Activated naive CD4-positive, alpha-beta T cell treated with anti-CD3 and anti-CD28 coated beads, Interleukin-2, amount 10 ng/mL, durations not matched to agents 7 days and 5 days (primary cell): ENCODE measurements at regions of chr6 and their contacts with region 1.

Region 1: DNA sequence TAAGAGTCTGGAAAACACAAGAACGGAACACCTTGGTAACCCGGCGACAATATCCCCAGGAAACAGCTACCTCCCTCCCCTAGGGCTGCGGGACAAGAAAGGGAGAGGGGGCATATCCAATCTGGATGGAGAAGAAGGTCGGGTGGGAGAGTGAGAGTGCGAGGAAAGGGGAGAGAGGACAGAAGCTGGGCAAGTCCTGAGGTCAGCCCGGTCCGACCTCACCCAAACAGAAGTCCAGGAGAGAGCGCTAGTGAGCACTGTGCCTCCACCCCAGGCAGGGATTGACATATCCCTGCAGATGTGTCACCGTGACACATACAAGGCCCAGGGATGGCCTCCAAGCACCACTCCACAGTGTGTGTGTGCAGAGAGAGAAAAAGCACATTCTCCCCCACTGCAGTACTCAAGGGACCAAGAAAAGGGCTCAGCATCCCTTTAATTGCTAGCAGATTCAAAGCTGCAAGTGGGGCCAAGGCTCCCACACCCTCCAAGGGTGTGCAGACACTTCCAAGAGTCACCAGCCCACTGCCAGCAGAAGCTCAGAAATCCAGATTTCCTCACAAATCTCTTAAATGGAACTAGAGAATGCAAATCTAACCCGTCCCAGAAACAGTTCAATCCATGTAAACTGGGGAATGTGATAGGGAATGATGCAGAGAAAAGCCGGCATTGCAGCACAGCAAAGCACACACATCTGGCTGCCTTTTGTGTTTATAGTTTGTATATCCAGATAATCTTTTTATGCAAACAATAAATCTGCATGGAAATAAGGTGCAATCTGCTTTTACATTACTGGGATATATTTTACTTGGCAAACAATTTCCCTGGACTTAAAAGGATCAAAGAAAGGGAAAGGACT is 3.1 kb downstream of the PXDC1 start:
- DNase-seq: peak; percentile 61
- H3K4me3 Mint-ChIP-seq: no peak overlapping the region
- H3K27ac Mint-ChIP-seq: no peak overlapping the region
- H3K4me1 Mint-ChIP-seq: peaks cover 6% of the 10 kb centered on the region
- H3K27me3 Mint-ChIP-seq: peaks cover 82% of the 10 kb centered on the region

Region 2: DNA sequence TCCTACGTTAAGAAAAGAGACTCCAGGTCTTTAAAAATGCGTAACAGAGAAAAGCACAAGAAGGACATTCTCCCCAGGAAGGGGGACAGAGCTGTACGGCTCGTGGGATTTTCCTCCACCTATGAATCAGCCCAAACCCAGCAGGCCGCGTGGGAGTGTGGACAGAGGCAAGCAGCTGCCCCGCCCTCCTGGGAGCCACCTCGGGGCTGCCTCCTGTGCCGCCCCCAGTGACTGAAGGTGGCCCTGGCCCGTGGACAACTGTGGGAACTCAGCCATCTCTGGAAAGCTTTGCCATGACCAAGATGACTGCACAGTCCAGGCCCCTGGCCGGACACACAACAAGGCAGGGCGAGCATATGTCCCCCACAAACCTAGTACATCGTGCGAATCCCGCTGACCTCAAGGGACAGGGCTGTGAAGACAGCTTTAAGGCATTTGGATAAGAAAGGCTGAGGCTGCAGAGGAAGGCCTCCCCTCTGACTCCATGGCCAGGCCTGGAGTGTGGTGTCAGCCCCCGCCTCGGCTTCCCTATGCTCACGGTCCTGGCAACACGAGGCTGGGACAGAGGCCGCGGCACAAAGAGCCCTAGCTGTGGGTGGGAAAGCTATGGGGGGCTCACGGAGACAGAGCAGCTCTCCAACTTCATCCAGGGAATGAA is 23.9 kb before region 1 on chr6:
- CTCF ChIA-PET with region 1: no interaction called
- DNase-seq: no peak
- H3K4me3 Mint-ChIP-seq: no peak overlapping the region
- H3K27ac Mint-ChIP-seq: no peak overlapping the region
- H3K4me1 Mint-ChIP-seq: peaks cover 4% of the 10 kb centered on the region
- H3K27me3 Mint-ChIP-seq: peaks cover 8% of the 10 kb centered on the region

Region 3: DNA sequence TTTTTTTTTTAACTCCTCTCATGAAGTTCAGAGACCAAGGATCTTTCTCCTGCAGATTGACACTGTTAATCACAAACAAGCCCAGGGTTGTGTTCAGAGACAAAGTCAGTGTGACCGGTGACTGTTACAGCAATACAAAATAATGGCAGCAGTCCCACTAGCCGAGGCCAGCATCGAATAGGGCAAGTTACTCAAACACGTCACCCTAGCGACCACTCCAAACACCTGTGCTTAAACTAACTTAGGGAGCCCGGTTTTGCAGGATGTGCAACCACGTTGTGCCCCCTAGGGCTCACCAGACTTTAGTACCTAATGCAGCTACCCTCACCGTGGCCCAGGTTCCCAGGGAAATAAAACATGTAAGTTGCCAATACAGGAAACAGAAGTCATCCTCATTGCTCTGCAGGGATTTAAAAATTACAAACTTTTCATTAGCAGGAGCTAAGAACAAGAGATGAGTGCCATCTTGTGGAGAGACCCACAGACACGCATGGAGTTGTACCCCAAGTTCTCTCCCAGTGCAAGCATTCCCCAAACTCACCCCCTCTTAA is 138.8 kb after region 1 on chr6:
- CTCF ChIA-PET with region 1: interaction called, 11 read pairs
- DNase-seq: no peak
- H3K4me3 Mint-ChIP-seq: no peak overlapping the region
- H3K27ac Mint-ChIP-seq: no peak overlapping the region
- H3K4me1 Mint-ChIP-seq: no peaks in the 10 kb centered on the region
- H3K27me3 Mint-ChIP-seq: peaks cover 27% of the 10 kb centered on the region

Region 4: GRCh38 chr6:3990692-3991501 is 242.5 kb after region 1 on chr6:
- CTCF ChIA-PET with region 1: interaction called, 12 read pairs
- DNase-seq: peak; percentile 80
- H3K4me3 Mint-ChIP-seq: no peak overlapping the region
- H3K27ac Mint-ChIP-seq: no peak overlapping the region
- H3K4me1 Mint-ChIP-seq: peaks cover 5% of the 10 kb centered on the region
- H3K27me3 Mint-ChIP-seq: no peaks in the 10 kb centered on the region